ENCODE measurements at regions of chr6 and their contacts with region 1.

Region 1: DNA sequence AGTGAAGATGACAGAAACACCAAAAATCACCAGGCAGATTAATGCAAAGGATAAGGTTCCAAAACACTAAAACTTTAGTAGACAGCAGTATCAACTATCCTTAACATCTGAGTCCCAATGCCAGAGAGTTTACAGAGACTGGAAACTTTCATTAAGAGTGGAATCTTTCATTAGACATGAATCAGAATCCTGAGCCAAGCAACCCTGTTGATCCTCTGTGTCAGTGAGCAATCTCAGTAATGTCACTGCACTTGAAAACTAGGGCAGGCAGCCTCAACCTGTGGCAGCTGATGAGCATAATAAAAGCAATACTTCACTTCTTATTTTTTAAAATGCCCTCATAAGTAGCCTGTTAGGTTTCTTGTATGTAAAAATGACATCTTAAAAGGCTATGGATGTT is 252.8 kb upstream of the PLN start:
- DNase-seq: no peak
- H3K4me3 ChIP-seq: no peak overlapping the region
- H3K27ac ChIP-seq: peak overlapping the region; percentile 59 to 76 (median 72)
- H3K4me1 ChIP-seq: peaks cover 0 to 75% (median 56%) of the 10 kb centered on the region in 4 donors
- H3K27me3 ChIP-seq: no peaks in the 10 kb centered on the region
- CTCF ChIP-seq: no peak
- EP300 ChIP-seq: peak in 3 of 4 donors; percentile 38 to 68 (median 61)
- POLR2A ChIP-seq: no peak

Region 2: DNA sequence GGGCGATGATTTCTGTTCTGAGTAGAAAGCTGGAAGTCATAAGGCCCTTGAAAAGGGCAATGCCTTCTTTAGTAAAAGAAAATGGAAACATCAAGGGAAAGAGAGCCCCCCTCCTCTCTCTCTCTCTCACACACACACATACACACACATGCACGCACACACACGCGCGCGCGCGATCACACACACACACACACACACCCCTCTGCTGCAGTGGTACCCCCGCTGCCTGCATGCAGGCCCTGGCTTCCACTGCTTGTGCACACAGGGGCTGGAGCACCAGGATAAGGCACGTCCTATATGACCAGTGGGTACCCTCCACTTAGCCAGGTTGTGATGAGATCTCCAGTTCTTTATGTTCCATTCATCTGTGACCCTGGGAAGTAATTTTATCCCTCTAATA is 87.4 kb before region 1 on chr6:
- intact Hi-C with region 1: no loop called
- DNase-seq: no peak
- H3K4me3 ChIP-seq: no peak overlapping the region
- H3K27ac ChIP-seq: no peak overlapping the region
- H3K4me1 ChIP-seq: no peaks in the 10 kb centered on the region
- H3K27me3 ChIP-seq: no peaks in the 10 kb centered on the region
- CTCF ChIP-seq: no peak
- EP300 ChIP-seq: no peak
- POLR2A ChIP-seq: no peak

Region 3: GRCh38 chr6:118327237-118327636 is 31.9 kb after region 1 on chr6:
- intact Hi-C with region 1: loop called (anchors 2 kb)
- DNase-seq: no peak
- H3K4me3 ChIP-seq: no peak overlapping the region
- H3K27ac ChIP-seq: peak overlapping the region; percentile 45 to 75 (median 69)
- H3K4me1 ChIP-seq: peaks cover 0 to 48% (median 34%) of the 10 kb centered on the region in 4 donors
- H3K27me3 ChIP-seq: no peaks in the 10 kb centered on the region
- CTCF ChIP-seq: no peak
- EP300 ChIP-seq: no peak
- POLR2A ChIP-seq: no peak

Region 4: DNA sequence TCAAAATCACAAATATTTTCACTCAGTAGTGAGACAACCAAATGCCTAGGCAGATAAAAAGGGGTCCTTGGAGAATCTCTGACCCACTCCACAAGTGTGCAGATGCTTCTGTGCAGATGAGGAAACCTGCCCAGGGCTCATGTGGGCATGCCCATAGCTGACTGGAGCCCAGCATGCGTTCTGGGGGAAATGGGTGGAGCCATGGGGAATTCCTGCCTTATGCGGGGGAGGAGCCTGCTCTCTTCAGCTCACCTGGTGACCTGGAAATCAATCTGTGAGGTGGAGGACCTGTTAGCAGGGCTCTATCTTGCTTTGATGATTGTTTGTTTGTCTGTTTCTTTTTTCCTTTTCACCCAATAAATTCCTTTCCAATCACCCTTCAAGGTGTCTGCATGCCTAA is 229.3 kb after region 1 on chr6:
- intact Hi-C with region 1: loop called (anchors 5 kb)
- DNase-seq: no peak
- H3K4me3 ChIP-seq: no peak overlapping the region
- H3K27ac ChIP-seq: peak overlapping the region in 2 of 4 donors; percentile 61 to 63
- H3K4me1 ChIP-seq: peaks cover 0 to 52% (median 37%) of the 10 kb centered on the region in 4 donors
- H3K27me3 ChIP-seq: no peaks in the 10 kb centered on the region
- CTCF ChIP-seq: no peak
- EP300 ChIP-seq: no peak
- POLR2A ChIP-seq: no peak

Region 5: GRCh38 chr6:118843685-118844390 is 548.5 kb after region 1 on chr6:
- intact Hi-C with region 1: no loop called
- DNase-seq: no peak
- H3K4me3 ChIP-seq: no peak overlapping the region
- H3K27ac ChIP-seq: no peak overlapping the region
- H3K4me1 ChIP-seq: peaks cover 0 to 5% (median 2%) of the 10 kb centered on the region in 4 donors
- H3K27me3 ChIP-seq: no peaks in the 10 kb centered on the region
- CTCF ChIP-seq: no peak
- EP300 ChIP-seq: no peak
- POLR2A ChIP-seq: no peak